ENCODE measurements at regions of chr2 and their contacts with region 1.

Region 1: GRCh38 chr2:231674587-231675338 is 33.6 kb upstream of the PTMA start:
- DNase-seq: no peak
- ATAC-seq: peak; percentile 63
- H3K4me3 ChIP-seq: no peak overlapping the region
- H3K27ac ChIP-seq: peak overlapping the region; percentile 96
- H3K4me1 ChIP-seq: peaks cover 49% of the 10 kb centered on the region
- H3K27me3 ChIP-seq: no peaks in the 10 kb centered on the region
- CTCF ChIP-seq: peak; percentile 96

Region 2: DNA sequence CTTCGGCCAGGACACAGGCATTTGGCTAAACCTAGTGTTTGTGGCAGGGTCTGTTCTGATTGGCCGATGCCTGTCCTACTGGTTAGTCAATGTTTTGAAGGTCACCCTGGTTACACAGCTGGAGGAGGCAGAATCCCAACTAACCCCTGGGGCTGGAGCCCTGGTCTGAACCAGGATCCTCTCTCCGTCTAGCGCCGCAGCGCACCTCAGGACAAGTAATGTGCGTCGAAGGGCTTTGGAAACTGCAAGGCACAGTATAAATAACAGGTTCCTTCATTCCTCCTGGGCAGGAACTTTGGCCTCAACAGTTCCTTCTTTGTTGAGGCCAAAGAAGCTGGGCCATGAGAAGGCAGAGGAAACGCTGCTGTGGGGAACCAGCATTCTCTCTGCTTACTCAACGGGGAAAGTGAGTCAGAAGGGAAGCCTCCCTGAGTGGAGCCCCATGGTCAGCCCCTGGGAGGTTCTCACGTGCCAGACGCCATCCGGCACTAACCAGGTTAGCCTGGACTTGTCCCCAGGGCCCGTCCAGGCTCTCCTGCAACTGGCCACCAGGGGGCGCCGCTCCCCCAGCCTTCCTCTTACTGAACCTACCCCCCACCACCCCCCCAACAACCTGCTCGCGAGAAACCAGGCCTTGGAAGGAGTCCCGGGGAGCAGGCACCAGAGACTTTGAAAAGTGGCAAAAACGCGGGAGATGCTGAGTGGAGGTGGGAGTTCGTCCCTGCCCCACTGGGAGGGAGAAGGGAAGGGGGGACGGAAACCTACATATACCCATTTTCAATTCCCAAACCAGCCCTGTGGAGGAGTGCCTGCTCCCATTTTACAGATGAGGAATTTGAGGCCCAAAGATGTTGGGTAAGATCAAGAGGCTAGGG is 62.3 kb before region 1 on chr2:
- CTCF ChIA-PET with region 1: interaction called, 45 read pairs
- POLR2A ChIA-PET with region 1: interaction called, 3 read pairs
- in situ Hi-C with region 1: no loop called
- intact Hi-C with region 1: loop called (anchors 2 kb)
- DNase-seq: peak; percentile 75
- ATAC-seq: peak; percentile 68
- H3K4me3 ChIP-seq: peak overlapping the region in 1 of 2 experiments; percentile 8; a peak in 1 of 4 replicates
- H3K27ac ChIP-seq: peak overlapping the region; percentile 92
- H3K4me1 ChIP-seq: peaks cover 46% of the 10 kb centered on the region
- H3K27me3 ChIP-seq: no peaks in the 10 kb centered on the region
- CTCF ChIP-seq: peak; percentile 97

Region 3: DNA sequence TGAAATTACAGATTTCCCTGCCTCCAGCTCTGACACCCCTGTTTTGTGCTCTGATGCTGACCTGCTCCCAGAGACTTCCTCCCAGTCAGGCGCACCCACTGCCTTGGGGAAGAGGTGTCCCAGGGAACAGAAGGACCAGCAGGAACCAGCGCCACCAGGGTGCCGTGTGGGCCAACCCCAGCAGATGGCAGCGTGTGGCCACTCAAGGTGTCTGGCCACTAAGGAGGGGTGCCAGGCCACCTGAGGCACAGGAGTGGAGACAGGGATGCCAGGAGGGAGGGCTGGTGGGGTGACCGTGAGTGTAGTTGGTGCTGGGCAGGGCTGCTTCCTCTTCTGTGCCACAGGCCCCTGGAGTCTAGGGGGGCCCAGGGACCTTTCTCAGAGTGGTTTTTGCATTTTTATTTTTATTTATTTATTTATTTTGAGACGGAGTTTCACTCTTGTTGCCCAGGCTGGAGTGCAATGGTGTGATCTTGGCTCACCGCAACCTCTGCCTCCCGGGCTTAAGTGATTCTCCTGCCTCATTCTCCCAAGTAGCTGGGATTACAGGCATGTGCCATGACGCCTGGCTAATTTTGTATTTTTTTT is 26.1 kb before region 1 on chr2:
- CTCF ChIA-PET with region 1: interaction called, 11 read pairs
- POLR2A ChIA-PET with region 1: interaction called, 9 read pairs
- in situ Hi-C with region 1: no loop called
- intact Hi-C with region 1: loop called (anchors 1 kb)
- DNase-seq: peak; percentile 55
- ATAC-seq: peak; percentile 99
- H3K4me3 ChIP-seq: no peak overlapping the region
- H3K27ac ChIP-seq: peak overlapping the region; percentile 29; the same call in 1 of the 2 replicates
- H3K4me1 ChIP-seq: peaks cover 21% of the 10 kb centered on the region
- H3K27me3 ChIP-seq: no peaks in the 10 kb centered on the region
- CTCF ChIP-seq: peak; percentile 90

Region 4: DNA sequence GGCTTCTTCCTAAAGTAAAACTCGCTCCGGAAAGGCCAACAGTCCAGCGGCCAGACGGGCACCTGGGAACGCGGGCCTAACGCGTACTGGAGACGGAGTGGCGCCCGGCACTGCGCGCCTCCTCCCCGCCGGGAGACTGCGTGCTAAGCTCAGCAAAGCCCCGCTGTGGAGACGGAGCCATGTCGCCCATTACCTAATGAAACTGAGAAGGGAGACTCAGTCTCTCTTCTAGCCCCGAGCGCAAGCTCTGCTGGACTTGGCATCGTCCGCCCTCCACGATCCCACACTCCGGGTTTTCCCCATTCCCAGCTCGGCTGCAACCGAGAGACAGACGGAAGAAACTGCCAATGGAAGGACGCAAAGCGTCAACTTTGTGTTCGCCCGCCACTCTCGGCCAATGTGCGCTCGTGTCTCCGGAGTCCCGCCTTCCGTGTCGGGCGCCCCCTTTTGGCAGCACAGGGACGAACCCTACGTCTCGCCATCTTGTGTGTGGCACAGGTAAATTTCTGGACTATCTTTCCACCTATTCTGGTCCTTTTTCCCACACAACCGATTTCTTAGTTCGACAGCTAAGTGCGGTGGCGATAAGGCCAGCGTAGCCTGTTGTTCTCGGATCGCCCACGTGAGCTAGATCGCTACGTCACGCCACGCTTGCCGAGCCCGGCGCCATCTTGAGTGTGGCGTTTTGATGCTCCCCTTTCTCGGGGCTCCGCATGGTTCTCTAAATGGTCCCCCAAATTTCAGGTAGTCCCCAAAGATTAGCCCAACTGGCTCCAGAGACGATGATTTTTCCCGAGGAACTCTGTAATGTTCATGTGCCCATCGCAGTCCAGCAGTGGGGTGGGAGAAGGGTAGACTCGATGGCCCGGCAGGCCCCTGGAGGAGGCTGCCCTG is 32.2 kb after region 1 on chr2:
- CTCF ChIA-PET with region 1: interaction called, 14 read pairs
- POLR2A ChIA-PET with region 1: no interaction called
- in situ Hi-C with region 1: no loop called
- intact Hi-C with region 1: no loop called
- DNase-seq: peak; percentile 93
- ATAC-seq: peak; percentile 61
- H3K4me3 ChIP-seq: peak overlapping the region; percentile 75 to 78
- H3K27ac ChIP-seq: peak overlapping the region; percentile 99
- H3K4me1 ChIP-seq: peaks cover 20% of the 10 kb centered on the region
- H3K27me3 ChIP-seq: no peaks in the 10 kb centered on the region
- CTCF ChIP-seq: peak; percentile 97

Region 5: GRCh38 chr2:231737761-231738160 is 63.0 kb after region 1 on chr2:
- CTCF ChIA-PET with region 1: no interaction called
- POLR2A ChIA-PET with region 1: no interaction called
- in situ Hi-C with region 1: no loop called
- intact Hi-C with region 1: no loop called
- DNase-seq: no peak
- ATAC-seq: no peak
- H3K4me3 ChIP-seq: no peak overlapping the region
- H3K27ac ChIP-seq: no peak overlapping the region
- H3K4me1 ChIP-seq: no peaks in the 10 kb centered on the region
- H3K27me3 ChIP-seq: no peaks in the 10 kb centered on the region
- CTCF ChIP-seq: no peak

Region 6: DNA sequence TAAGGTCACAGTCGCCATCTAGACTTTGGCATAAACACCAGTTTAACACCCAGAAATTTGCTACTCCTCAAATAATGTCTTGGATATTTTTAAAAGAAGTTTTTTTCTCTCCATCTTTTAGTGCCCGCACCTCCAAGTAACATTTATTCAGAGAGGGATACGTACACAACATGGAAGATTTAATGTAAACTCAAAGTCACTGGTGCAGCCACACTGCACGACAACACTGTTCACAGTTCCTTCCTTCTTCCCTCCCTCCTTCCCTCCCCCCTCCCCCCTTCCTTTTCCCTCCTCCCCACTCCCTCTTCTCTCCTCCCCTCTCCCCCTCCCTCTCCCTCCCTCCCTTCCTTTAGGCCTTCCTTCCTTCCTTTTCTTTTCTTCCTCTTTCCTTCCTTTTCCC is 194.9 kb after region 1 on chr2:
- CTCF ChIA-PET with region 1: no interaction called
- POLR2A ChIA-PET with region 1: interaction called, 11 read pairs
- in situ Hi-C with region 1: no loop called
- intact Hi-C with region 1: no loop called
- DNase-seq: no peak
- ATAC-seq: no peak
- H3K4me3 ChIP-seq: no peak overlapping the region
- H3K27ac ChIP-seq: no peak overlapping the region
- H3K4me1 ChIP-seq: no peaks in the 10 kb centered on the region
- H3K27me3 ChIP-seq: no peaks in the 10 kb centered on the region
- CTCF ChIP-seq: no peak

Measured in Panc1 (cell line).